ENCODE measurements at regions of chr4 and their contacts with region 1.

Region 1: DNA sequence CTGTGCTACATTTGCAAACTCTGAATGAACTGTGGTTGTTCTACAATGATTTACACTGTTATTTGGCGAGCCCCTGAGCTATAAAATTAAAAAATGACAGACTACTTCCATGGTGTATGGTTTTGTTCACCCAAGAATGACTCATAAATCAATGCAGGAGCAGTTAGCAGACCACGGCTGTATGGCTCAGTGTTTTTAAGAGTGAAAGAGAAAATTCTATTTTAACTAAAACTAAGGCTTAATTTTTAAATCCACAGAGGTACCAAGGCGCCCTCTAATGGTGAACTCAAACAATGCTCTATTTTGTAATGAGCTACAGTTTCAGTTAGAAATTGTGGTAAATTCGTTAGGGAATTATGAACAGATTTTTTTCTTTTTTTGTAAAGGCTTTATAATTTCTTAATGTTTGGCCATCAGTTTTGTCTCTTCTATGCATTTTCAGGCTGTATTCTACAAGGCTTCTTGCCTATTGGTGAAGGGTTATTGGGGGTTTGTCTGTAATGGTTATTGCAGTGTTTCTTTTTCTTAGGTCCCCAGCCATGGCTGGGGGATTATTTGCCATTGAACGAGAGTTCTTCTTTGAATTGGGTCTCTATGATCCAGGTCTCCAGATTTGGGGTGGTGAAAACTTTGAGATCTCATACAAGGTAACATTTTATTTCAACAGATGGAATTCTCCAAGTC is 32.5 kb downstream of the HMGB2 start:
- DNase-seq: peak in 2 of 9 experiments; percentile 37 to 48
- ATAC-seq: peak; percentile 51
- H3K4me3 ChIP-seq: no peak overlapping the region
- H3K4me3 Mint-ChIP-seq: no peak overlapping the region
- H3K27ac ChIP-seq: no peak overlapping the region
- H3K27ac Mint-ChIP-seq: peak overlapping the region; percentile 4
- H3K4me1 ChIP-seq: no peaks in the 10 kb centered on the region
- H3K4me1 Mint-ChIP-seq: no peaks in the 10 kb centered on the region
- H3K27me3 ChIP-seq: no peaks in the 10 kb centered on the region
- H3K27me3 Mint-ChIP-seq: no peaks in the 10 kb centered on the region
- CTCF ChIP-seq: peak; percentile 90

Region 2: DNA sequence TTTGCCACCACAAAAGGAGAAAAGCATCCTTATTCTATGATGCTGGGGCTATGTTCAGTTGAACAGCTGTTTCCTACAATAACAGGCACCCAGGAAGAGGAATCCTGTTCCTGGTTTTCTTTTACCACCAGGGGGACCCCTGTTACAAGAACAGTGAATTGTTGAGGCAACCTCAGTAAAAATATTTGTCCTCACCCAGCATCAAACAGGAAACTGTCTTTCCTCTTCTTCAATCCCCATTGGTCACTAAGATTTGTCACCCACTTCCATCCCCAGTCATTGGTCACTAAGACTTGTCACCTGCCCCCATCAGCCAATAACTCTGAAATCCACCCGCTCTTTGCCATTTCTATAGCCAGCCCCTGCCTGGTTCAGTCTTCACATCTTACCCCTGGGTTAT is 276.5 kb before region 1 on chr4:
- CTCF ChIA-PET with region 1: interaction called, 15 read pairs
- POLR2A ChIA-PET with region 1: no interaction called
- intact Hi-C with region 1: loop called in 1 of 2 experiments (anchors 1 kb)
- DNase-seq: peak in 3 of 9 experiments; percentile 16 to 61 (median 42)
- ATAC-seq: peak; percentile 44
- H3K4me3 ChIP-seq: no peak overlapping the region
- H3K4me3 Mint-ChIP-seq: no peak overlapping the region
- H3K27ac ChIP-seq: no peak overlapping the region
- H3K27ac Mint-ChIP-seq: no peak overlapping the region
- H3K4me1 ChIP-seq: no peaks in the 10 kb centered on the region
- H3K4me1 Mint-ChIP-seq: peaks cover 4% of the 10 kb centered on the region
- H3K27me3 ChIP-seq: no peaks in the 10 kb centered on the region
- H3K27me3 Mint-ChIP-seq: peaks cover 2% of the 10 kb centered on the region
- CTCF ChIP-seq: peak; percentile 51

Region 3: DNA sequence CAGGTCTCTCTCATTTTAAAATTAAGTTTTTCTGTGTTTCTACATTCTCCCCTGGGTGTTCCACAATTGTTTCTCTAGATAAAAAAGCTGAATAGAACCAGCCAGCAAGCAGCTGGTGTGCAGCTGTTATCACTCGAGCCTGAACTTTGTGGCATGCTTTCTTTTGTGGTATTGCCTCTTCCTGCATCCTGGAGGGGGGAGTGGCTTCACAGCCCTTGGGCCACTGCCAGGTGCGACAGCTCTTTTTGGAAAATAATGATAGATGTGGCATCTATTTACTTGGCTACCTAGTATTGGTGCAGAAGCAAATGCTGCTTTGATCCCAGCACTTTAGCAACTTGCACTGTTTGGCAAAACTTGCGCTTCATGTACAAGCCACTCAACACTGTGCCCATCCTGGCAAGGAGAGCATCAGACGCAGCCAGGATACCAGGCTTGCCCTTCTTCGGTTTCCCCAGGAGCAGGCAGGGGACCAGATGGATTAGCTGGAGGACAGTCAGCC is 36.9 kb before region 1 on chr4:
- CTCF ChIA-PET with region 1: interaction called, 10 read pairs
- POLR2A ChIA-PET with region 1: no interaction called
- intact Hi-C with region 1: no loop called
- DNase-seq: peak in 7 of 9 experiments; percentile 8 to 53 (median 27)
- ATAC-seq: peak; percentile 59
- H3K4me3 ChIP-seq: no peak overlapping the region
- H3K4me3 Mint-ChIP-seq: no peak overlapping the region
- H3K27ac ChIP-seq: no peak overlapping the region
- H3K27ac Mint-ChIP-seq: no peak overlapping the region
- H3K4me1 ChIP-seq: peaks cover 20% of the 10 kb centered on the region
- H3K4me1 Mint-ChIP-seq: peaks cover 35% of the 10 kb centered on the region
- H3K27me3 ChIP-seq: no peaks in the 10 kb centered on the region
- H3K27me3 Mint-ChIP-seq: no peaks in the 10 kb centered on the region
- CTCF ChIP-seq: no peak

Region 4: DNA sequence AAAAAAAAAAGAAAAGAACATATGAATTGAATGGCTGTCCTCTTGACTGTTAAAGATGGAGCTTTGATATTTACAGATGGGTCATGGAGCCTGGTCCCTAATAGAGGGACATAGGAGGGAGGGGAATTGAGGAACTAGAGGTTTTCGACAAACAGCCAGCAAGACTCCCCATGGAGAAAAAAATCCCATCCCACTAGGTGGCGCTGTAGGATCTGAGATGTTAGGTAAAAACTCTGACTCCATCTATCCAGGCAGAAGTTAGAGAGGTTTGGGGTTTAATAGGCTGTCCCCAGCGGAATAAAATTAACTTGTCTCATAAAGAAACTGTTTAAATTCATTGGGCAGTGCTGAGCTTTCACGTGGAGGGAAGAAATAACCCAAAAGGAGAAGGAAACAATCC is 13.4 kb before region 1 on chr4:
- CTCF ChIA-PET with region 1: interaction called, 18 read pairs
- POLR2A ChIA-PET with region 1: no interaction called
- intact Hi-C with region 1: no loop called
- DNase-seq: peak; percentile 36 to 77 (median 66)
- ATAC-seq: peak; percentile 31
- H3K4me3 ChIP-seq: no peak overlapping the region
- H3K4me3 Mint-ChIP-seq: peak overlapping the region; percentile 29
- H3K27ac ChIP-seq: no peak overlapping the region
- H3K27ac Mint-ChIP-seq: no peak overlapping the region
- H3K4me1 ChIP-seq: no peaks in the 10 kb centered on the region
- H3K4me1 Mint-ChIP-seq: peaks cover 13% of the 10 kb centered on the region
- H3K27me3 ChIP-seq: no peaks in the 10 kb centered on the region
- H3K27me3 Mint-ChIP-seq: no peaks in the 10 kb centered on the region
- CTCF ChIP-seq: peak; percentile 63

Region 5: GRCh38 chr4:173318648-173319211 is 17.1 kb after region 1 on chr4:
- CTCF ChIA-PET with region 1: interaction called, 11 read pairs
- POLR2A ChIA-PET with region 1: interaction called, 4 read pairs
- intact Hi-C with region 1: no loop called
- DNase-seq: peak in 2 of 9 experiments; percentile 48 to 60
- ATAC-seq: peak; percentile 66
- H3K4me3 ChIP-seq: no peak overlapping the region
- H3K4me3 Mint-ChIP-seq: no peak overlapping the region
- H3K27ac ChIP-seq: no peak overlapping the region
- H3K27ac Mint-ChIP-seq: no peak overlapping the region
- H3K4me1 ChIP-seq: no peaks in the 10 kb centered on the region
- H3K4me1 Mint-ChIP-seq: no peaks in the 10 kb centered on the region
- H3K27me3 ChIP-seq: no peaks in the 10 kb centered on the region
- H3K27me3 Mint-ChIP-seq: no peaks in the 10 kb centered on the region
- CTCF ChIP-seq: peak; percentile 66

Region 6: GRCh38 chr4:174305961-174306360 is 1004.3 kb after region 1 on chr4:
- CTCF ChIA-PET with region 1: no interaction called
- POLR2A ChIA-PET with region 1: no interaction called
- intact Hi-C with region 1: no loop called
- DNase-seq: no peak
- ATAC-seq: no peak
- H3K4me3 ChIP-seq: no peak overlapping the region
- H3K4me3 Mint-ChIP-seq: no peak overlapping the region
- H3K27ac ChIP-seq: no peak overlapping the region
- H3K27ac Mint-ChIP-seq: no peak overlapping the region
- H3K4me1 ChIP-seq: no peaks in the 10 kb centered on the region
- H3K4me1 Mint-ChIP-seq: peaks cover 1% of the 10 kb centered on the region
- H3K27me3 ChIP-seq: no peaks in the 10 kb centered on the region
- H3K27me3 Mint-ChIP-seq: no peaks in the 10 kb centered on the region
- CTCF ChIP-seq: no peak